Left colon (tissue), 2 donors: ENCODE measurements at regions of chr9 and their contacts with region 1.

Region 1: DNA sequence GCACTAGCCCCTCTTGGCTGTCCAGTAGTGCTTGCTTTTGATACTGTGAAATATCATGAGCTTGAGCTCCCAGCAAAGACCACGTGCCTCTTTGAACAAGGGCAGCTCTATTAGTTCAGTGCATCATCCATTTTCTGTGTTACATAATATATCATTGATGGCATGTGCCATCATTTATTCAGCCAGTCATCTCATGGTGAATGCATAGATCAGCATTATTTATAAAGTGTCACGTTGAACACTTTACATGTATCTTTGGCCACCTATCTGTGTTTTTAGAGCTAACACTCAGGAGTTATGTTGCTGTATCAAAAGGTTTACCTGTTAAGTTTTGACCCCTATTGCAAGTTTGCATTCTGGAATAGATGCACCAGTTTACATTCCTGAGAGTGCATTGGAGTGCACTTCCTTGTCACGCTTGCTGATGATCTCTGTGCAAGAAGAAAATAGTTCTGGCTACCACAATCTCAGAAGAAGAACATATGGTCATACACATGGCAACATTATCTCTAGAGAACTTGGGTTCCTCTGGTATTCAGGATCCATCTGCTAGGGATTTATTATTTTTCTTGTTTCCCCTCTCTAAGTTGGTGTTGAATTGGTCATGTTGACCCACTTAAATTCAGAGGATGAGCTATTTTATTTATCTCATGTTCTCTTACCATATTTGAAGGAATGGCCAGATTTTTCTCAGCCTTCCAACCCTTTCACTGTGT is 120.9 kb downstream of the SH3GL2 start:
- DNase-seq: no peak
- ATAC-seq: no peak

Region 2: GRCh38 chr9:17613763-17614162 is 86.0 kb before region 1 on chr9:
- intact Hi-C with region 1: no loop called
- DNase-seq: no peak
- ATAC-seq: no peak

Region 3: GRCh38 chr9:17635115-17635890 is 64.5 kb before region 1 on chr9:
- intact Hi-C with region 1: loop called in 1 of 2 experiments (anchors 10 kb)
- DNase-seq: no peak
- ATAC-seq: no peak